ENCODE measurements at regions of chr16 and their contacts with region 1.

Region 1: DNA sequence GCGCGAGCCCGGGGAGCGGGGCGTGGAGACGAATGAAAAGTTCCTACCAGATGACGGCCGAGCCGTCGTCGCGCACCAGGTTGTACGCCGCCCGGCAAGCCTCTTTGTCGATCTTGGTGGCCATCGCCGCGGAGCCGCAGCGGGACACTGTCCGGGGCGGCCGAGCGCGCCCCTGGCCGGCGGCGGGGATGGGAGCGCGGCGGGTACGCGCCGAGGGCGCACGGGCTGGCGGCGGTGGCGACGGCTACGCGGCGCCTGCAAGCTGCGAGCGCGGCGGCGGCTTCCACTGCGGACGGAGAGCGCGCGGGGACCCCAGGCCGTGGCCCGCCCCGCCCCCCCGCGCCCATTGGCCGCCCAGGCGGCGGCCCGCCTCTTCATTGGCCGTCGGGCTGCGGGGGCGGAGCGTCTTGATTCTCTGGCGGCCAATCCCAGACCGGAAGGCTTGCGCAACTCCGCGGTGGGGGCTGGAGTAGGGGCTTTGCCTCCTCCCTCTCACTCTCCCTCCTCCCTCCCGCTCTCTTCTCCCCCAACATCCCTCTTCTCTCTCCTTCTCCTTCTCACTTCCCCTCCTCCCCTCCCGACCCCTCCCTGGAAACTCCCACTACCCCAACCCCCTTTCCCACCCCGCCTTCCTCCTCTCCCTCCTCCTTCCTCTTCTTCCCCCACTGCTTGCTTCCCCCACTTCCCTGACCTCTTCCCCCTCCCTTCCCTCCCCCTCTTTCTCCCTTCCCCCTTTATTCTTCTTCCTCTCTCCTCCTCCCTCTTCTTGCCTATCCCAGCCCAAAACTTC is at the start of gene COTL1:
- DNase-seq: peak; percentile 99
- H3K4me3 ChIP-seq: peak within 1 kb of the TSS; percentile 70 to 90 (median 84)
- H3K27ac ChIP-seq: peak within 1 kb of the TSS; percentile 78 to 90 (median 84)
- H3K4me1 ChIP-seq: peaks cover 0 to 61% (median 48%) of the 10 kb centered on the region in 4 donors
- H3K27me3 ChIP-seq: no peaks in the 10 kb centered on the region
- CTCF ChIP-seq: no peak
- EP300 ChIP-seq: no peak
- POLR2A ChIP-seq: no peak
- total RNA-seq, gene COTL1: 34.6 to 48.6 (median 37.8) TPM

Region 2: GRCh38 chr16:84308120-84308519 is 309.9 kb before region 1 on chr16:
- intact Hi-C with region 1: loop called (anchors 10 kb)
- DNase-seq: peak; percentile 87
- H3K4me3 ChIP-seq: no peak overlapping the region
- H3K27ac ChIP-seq: peak overlapping the region in 3 of 4 donors; percentile 15 to 94 (median 55)
- H3K4me1 ChIP-seq: peaks cover 0 to 52% (median 43%) of the 10 kb centered on the region in 4 donors
- H3K27me3 ChIP-seq: no peaks in the 10 kb centered on the region
- CTCF ChIP-seq: peak in 3 of 4 experiments; percentile 60 to 76 (median 68)
- EP300 ChIP-seq: no peak
- POLR2A ChIP-seq: no peak

Region 3: DNA sequence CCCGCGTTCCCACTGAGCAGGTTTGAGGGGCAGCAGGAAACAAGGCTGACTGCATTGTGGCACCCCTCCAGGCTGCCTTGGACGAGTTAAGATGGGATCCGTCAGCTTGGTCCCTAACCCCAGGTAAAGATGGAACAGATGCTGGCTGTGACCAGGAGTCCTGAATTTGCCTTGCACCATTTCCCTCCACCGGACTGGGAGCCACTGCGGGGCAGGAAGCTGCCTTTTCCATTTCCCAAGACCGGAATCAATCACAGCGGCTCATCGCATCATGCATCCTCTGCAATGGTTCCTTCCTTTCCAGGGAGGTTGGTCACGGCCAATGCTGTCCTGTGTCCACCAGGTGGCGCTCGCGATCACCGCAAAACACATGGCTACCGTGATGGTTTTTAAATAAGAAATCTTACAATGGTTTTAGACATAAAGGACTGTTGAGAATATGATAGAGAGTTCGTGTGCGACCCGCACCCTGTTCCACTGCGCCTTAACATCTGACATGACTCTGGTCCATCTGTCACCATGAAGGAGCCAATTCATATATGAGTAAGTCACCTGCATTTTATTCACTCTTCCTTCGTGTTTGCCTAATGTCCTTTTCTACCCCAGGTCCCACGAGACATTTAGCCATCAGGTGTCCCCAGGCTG is 106.7 kb before region 1 on chr16:
- intact Hi-C with region 1: loop called (anchors 1 kb)
- DNase-seq: peak; percentile 92
- H3K4me3 ChIP-seq: no peak overlapping the region
- H3K27ac ChIP-seq: no peak overlapping the region
- H3K4me1 ChIP-seq: peaks cover 0 to 11% (median 9%) of the 10 kb centered on the region in 4 donors
- H3K27me3 ChIP-seq: no peaks in the 10 kb centered on the region
- CTCF ChIP-seq: peak; percentile 84 to 97 (median 94)
- EP300 ChIP-seq: no peak
- POLR2A ChIP-seq: no peak

Region 4: DNA sequence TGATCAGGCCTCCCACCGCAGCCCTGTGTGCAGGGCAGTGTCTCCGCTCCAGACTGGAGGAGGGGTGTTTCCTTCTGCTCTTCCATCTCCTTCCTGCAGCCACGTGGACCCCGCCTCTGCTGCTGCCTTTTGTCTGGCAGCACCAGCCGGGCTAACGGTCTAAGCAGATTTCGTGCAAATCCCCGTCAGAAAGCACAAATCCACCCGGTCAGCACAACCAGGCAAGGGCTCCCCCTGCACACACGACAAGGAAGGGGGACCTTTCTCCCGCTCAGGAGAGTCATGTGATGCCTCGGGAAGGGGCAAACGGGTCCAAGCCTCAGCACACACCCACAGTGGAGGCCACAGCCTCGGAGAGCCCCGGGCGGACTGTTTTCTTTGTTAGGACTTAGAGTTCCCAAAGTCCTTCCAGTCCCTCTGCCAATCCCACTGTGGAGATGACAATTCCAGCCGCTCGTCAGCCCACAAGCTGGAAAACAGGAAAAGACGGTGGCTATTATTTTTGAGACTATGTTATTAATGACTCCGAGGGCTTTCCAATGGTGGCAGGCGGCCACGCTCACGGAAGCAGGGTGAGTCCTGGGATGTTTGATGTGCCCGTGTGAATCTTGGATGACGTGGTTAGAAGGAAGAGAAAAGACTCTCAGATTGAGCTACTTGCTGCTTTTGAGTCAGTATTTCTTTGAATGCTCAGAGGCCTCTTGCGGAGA is 91.0 kb before region 1 on chr16:
- intact Hi-C with region 1: loop called (anchors 5 kb)
- DNase-seq: no peak
- H3K4me3 ChIP-seq: peak overlapping the region in 3 of 4 donors; percentile 7 to 22 (median 12)
- H3K27ac ChIP-seq: peak overlapping the region; percentile 61 to 78 (median 72)
- H3K4me1 ChIP-seq: peaks cover 0 to 29% (median 25%) of the 10 kb centered on the region in 4 donors
- H3K27me3 ChIP-seq: no peaks in the 10 kb centered on the region
- CTCF ChIP-seq: no peak
- EP300 ChIP-seq: no peak
- POLR2A ChIP-seq: no peak

Region 5: GRCh38 chr16:84726079-84726668 is 108.2 kb after region 1 on chr16:
- intact Hi-C with region 1: loop called (anchors 2 kb)
- DNase-seq: peak; percentile 95
- H3K4me3 ChIP-seq: peak overlapping the region in 1 of 4 donors; percentile 9
- H3K27ac ChIP-seq: peak overlapping the region; percentile 3 to 68 (median 63)
- H3K4me1 ChIP-seq: peaks cover 0 to 62% (median 48%) of the 10 kb centered on the region in 4 donors
- H3K27me3 ChIP-seq: no peaks in the 10 kb centered on the region
- CTCF ChIP-seq: peak; percentile 92 to 95 (median 93)
- EP300 ChIP-seq: no peak
- POLR2A ChIP-seq: no peak

Region 6: GRCh38 chr16:84765616-84766580 is 147.9 kb after region 1 on chr16:
- intact Hi-C with region 1: no loop called
- DNase-seq: peak; percentile 56
- H3K4me3 ChIP-seq: no peak overlapping the region
- H3K27ac ChIP-seq: peak overlapping the region in 3 of 4 donors; percentile 33 to 52 (median 44)
- H3K4me1 ChIP-seq: peaks cover 0 to 27% (median 7%) of the 10 kb centered on the region in 4 donors
- H3K27me3 ChIP-seq: no peaks in the 10 kb centered on the region
- CTCF ChIP-seq: no peak
- EP300 ChIP-seq: no peak
- POLR2A ChIP-seq: no peak

Measured in sigmoid colon (tissue), 7 donors.